K562 (cell line): ENCODE measurements at regions of chr11 and their contacts with region 1.

Region 1: GRCh38 chr11:100855466-100856067 is 168.5 kb downstream of the ARHGAP42 start:
- DNase-seq: peak; percentile 13 to 44 (median 18)
- ATAC-seq: peak; percentile 47; the same call in 1 of the 3 replicates
- H3K4me3 ChIP-seq: no peak overlapping the region
- H3K27ac ChIP-seq: no peak overlapping the region
- H3K4me1 ChIP-seq: no peaks in the 10 kb centered on the region; a peak in 1 of 5 replicates
- H3K27me3 ChIP-seq: no peaks in the 10 kb centered on the region
- CTCF ChIP-seq: peak; percentile 29 to 65 (median 32); a peak in 3 of 6 replicates
- EP300 ChIP-seq: no peak
- POLR2A ChIP-seq: no peak
- RAD21 ChIP-seq: peak; percentile 74 to 75

Region 2: GRCh38 chr11:100681064-100681502 is 174.5 kb before region 1 on chr11:
- CTCF ChIA-PET with region 1: interaction called, 4 read pairs
- POLR2A ChIA-PET with region 1: no interaction called
- in situ Hi-C with region 1: no loop called
- intact Hi-C with region 1: loop called (anchors 2 kb)
- DNase-seq: peak; percentile 18 to 71 (median 38)
- ATAC-seq: peak; percentile 96
- H3K4me3 ChIP-seq: no peak overlapping the region
- H3K27ac ChIP-seq: peak overlapping the region; percentile 30; the same call in 1 of the 3 replicates
- H3K4me1 ChIP-seq: no peaks in the 10 kb centered on the region; a peak in 2 of 5 replicates
- H3K27me3 ChIP-seq: no peaks in the 10 kb centered on the region
- CTCF ChIP-seq: no peak
- EP300 ChIP-seq: no peak
- POLR2A ChIP-seq: no peak
- RAD21 ChIP-seq: no peak